HepG2 (cell line): ENCODE measurements at regions of chr1 and their contacts with region 1.

Region 1: DNA sequence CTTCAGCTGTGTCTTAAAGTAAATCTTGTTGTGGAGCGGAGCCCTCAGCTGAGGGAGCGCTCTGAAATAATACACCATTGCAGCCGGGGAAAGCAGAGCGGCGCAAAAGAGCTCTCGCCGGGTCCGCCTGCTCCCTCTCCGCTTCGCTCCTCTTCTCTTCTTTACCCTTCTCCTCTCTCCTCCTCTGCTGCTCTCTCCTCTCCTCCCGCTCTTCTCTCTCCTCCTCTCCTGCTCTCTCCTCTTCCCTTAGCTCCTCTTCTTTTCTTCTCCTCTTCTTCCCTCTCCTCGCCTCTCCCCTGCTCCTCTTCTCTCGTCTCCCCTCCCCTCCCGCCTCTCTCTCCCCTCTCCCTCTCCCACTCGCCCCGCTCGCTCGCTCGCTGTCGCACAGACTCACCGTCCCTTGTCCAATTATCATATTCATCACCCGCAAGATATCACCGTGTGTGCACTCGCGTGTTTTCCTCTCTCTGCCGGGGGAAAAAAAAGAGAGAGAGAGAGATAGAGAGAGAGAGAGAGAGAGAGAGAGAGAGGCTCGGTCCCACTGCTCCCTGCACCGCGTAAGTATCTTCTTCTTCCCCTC is at the start of gene PROX1:
- DNase-seq: no peak
- ATAC-seq: peak; percentile 69
- H3K4me3 ChIP-seq: peak within 1 kb of the TSS; percentile 82 to 94 (median 84)
- H3K27ac ChIP-seq: peak within 1 kb of the TSS; percentile 72
- H3K4me1 ChIP-seq: peaks cover 59% of the 10 kb centered on the region
- H3K27me3 ChIP-seq: no peaks in the 10 kb centered on the region; a peak in 1 of 5 replicates
- CTCF ChIP-seq: no peak
- EP300 ChIP-seq: no peak
- POLR2A ChIP-seq: peak; percentile 77 to 79
- RAD21 ChIP-seq: 0 out of 2 replicates have a peak, but pooled peaks have one; percentile 23
- total RNA-seq, gene PROX1: 30.2 and 48.5 TPM in 2 replicates

Region 2: DNA sequence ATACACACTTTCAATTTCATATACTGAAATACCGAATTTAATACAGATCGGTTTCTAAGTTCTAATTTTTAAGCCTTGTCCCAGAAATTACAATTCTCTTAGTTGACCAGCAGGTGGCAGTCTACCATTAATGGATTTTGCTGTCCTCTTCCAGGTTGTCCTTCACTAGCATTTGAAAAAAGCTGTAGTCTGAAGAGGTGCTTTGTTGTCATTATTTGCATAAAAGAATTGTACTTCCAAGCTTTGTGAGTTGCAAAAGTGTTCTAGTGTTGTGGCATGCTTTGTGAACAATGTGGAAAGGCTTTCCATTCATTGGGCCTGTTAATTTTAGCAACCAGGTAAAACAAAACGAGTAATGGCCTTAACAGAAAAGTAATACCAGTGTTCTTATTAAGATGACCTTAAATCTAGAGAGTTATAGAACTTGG is 743.3 kb before region 1 on chr1:
- CTCF ChIA-PET with region 1: no interaction called
- POLR2A ChIA-PET with region 1: no interaction called
- in situ Hi-C with region 1: loop called (anchors 25 kb)
- intact Hi-C with region 1: loop called (anchors 5 kb)
- DNase-seq: peak; percentile 73
- ATAC-seq: peak; percentile 54
- H3K4me3 ChIP-seq: no peak overlapping the region
- H3K27ac ChIP-seq: no peak overlapping the region
- H3K4me1 ChIP-seq: peaks cover 19% of the 10 kb centered on the region
- H3K27me3 ChIP-seq: no peaks in the 10 kb centered on the region
- CTCF ChIP-seq: peak; percentile 79
- EP300 ChIP-seq: no peak
- POLR2A ChIP-seq: no peak
- RAD21 ChIP-seq: peak; percentile 82

Region 3: GRCh38 chr1:213669964-213670691 is 317.9 kb before region 1 on chr1:
- CTCF ChIA-PET with region 1: no interaction called
- POLR2A ChIA-PET with region 1: no interaction called
- in situ Hi-C with region 1: no loop called
- intact Hi-C with region 1: loop called (anchors 10 kb)
- DNase-seq: no peak
- ATAC-seq: peak; percentile 72
- H3K4me3 ChIP-seq: no peak overlapping the region
- H3K27ac ChIP-seq: no peak overlapping the region
- H3K4me1 ChIP-seq: peaks cover 27% of the 10 kb centered on the region
- H3K27me3 ChIP-seq: no peaks in the 10 kb centered on the region
- CTCF ChIP-seq: peak; percentile 15; the same call in 1 of the 2 replicates
- EP300 ChIP-seq: no peak
- POLR2A ChIP-seq: no peak
- RAD21 ChIP-seq: no peak

Region 4: DNA sequence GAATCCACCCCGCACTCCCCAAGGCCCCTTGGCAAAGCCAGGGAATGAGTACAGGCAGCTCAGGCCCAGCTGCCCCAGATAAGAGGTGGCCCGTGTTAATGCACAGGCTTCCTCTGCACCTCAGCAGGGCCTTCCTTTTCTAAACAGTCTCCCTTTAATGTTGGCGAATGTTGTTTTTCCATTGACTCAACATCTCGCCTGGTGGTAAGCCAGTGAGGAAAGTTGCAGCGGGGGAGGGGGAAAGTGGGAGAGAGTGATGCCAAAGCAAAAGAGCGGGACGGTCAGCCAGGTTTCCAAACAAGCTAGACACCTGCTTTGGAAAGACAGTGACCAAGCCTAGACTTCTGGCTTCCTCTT is 10.6 kb before region 1 on chr1:
- CTCF ChIA-PET with region 1: no interaction called
- POLR2A ChIA-PET with region 1: interaction called, 21 read pairs
- in situ Hi-C with region 1: no loop called
- intact Hi-C with region 1: no loop called
- DNase-seq: peak; percentile 54
- ATAC-seq: peak; percentile 80
- H3K4me3 ChIP-seq: no peak overlapping the region
- H3K27ac ChIP-seq: peak overlapping the region; percentile 37
- H3K4me1 ChIP-seq: peaks cover 45% of the 10 kb centered on the region
- H3K27me3 ChIP-seq: no peaks in the 10 kb centered on the region
- CTCF ChIP-seq: no peak
- EP300 ChIP-seq: peak in 1 of 2 experiments; percentile 19; a peak in 1 of 4 replicates
- POLR2A ChIP-seq: no peak
- RAD21 ChIP-seq: no peak

Region 5: DNA sequence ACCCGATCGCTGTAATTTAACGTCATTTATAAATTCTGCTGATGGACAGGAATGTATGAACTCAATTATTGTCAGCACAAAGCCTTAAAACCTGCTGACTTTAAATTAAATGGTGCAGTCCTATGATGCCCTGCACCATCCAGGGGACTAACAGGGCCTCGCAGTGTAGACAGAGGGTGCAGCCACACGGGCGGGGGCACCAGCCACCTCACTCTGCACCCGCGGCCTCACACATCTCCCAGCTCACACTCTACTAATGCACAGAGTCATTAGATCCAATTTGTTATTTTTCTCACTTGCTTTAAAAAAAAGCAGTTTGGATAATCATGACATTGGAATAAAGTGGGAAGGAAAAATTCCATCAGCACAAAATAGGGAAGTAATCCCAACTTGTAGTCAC is 49.5 kb after region 1 on chr1:
- CTCF ChIA-PET with region 1: no interaction called
- POLR2A ChIA-PET with region 1: interaction called, 12 read pairs
- in situ Hi-C with region 1: no loop called
- intact Hi-C with region 1: no loop called
- DNase-seq: no peak
- ATAC-seq: peak; percentile 42
- H3K4me3 ChIP-seq: no peak overlapping the region
- H3K27ac ChIP-seq: no peak overlapping the region
- H3K4me1 ChIP-seq: peaks cover 77% of the 10 kb centered on the region
- H3K27me3 ChIP-seq: no peaks in the 10 kb centered on the region; a peak in 1 of 5 replicates
- CTCF ChIP-seq: no peak
- EP300 ChIP-seq: no peak
- POLR2A ChIP-seq: peak in 1 of 2 experiments; percentile 12; a peak in 1 of 4 replicates
- RAD21 ChIP-seq: no peak

Region 6: GRCh38 chr1:214123061-214123784 is 135.2 kb after region 1 on chr1:
- CTCF ChIA-PET with region 1: interaction called, 4 read pairs
- POLR2A ChIA-PET with region 1: interaction called, 52 read pairs
- in situ Hi-C with region 1: no loop called
- intact Hi-C with region 1: loop called (anchors 1 kb)
- DNase-seq: peak; percentile 86
- ATAC-seq: peak; percentile 91
- H3K4me3 ChIP-seq: no peak overlapping the region
- H3K27ac ChIP-seq: peak overlapping the region; percentile 49
- H3K4me1 ChIP-seq: peaks cover 62% of the 10 kb centered on the region
- H3K27me3 ChIP-seq: no peaks in the 10 kb centered on the region
- CTCF ChIP-seq: peak; percentile 92
- EP300 ChIP-seq: peak in 1 of 2 experiments; percentile 42; a peak in 1 of 4 replicates
- POLR2A ChIP-seq: no peak
- RAD21 ChIP-seq: peak; percentile 94